Colonic mucosa (tissue), 4 donors: ENCODE measurements at regions of chr11 and their contacts with region 1.

Region 1: GRCh38 chr11:128157423-128158298 is 429.7 kb downstream of the ETS1 start:
- DNase-seq: peak; percentile 60
- H3K4me3 ChIP-seq: no peak overlapping the region
- H3K27ac ChIP-seq: no peak overlapping the region
- H3K4me1 ChIP-seq: no peaks in the 10 kb centered on the region
- H3K27me3 ChIP-seq: no peaks in the 10 kb centered on the region
- CTCF ChIP-seq: peak; percentile 78

Region 2: GRCh38 chr11:127919206-127920000 is 238.3 kb before region 1 on chr11:
- intact Hi-C with region 1: no loop called
- DNase-seq: no peak
- H3K4me3 ChIP-seq: no peak overlapping the region
- H3K27ac ChIP-seq: no peak overlapping the region
- H3K4me1 ChIP-seq: no peaks in the 10 kb centered on the region
- H3K27me3 ChIP-seq: no peaks in the 10 kb centered on the region
- CTCF ChIP-seq: no peak

Region 3: GRCh38 chr11:127986073-127986472 is 171.6 kb before region 1 on chr11:
- intact Hi-C with region 1: no loop called
- DNase-seq: no peak
- H3K4me3 ChIP-seq: no peak overlapping the region
- H3K27ac ChIP-seq: no peak overlapping the region
- H3K4me1 ChIP-seq: no peaks in the 10 kb centered on the region
- H3K27me3 ChIP-seq: no peaks in the 10 kb centered on the region
- CTCF ChIP-seq: no peak

Region 4: DNA sequence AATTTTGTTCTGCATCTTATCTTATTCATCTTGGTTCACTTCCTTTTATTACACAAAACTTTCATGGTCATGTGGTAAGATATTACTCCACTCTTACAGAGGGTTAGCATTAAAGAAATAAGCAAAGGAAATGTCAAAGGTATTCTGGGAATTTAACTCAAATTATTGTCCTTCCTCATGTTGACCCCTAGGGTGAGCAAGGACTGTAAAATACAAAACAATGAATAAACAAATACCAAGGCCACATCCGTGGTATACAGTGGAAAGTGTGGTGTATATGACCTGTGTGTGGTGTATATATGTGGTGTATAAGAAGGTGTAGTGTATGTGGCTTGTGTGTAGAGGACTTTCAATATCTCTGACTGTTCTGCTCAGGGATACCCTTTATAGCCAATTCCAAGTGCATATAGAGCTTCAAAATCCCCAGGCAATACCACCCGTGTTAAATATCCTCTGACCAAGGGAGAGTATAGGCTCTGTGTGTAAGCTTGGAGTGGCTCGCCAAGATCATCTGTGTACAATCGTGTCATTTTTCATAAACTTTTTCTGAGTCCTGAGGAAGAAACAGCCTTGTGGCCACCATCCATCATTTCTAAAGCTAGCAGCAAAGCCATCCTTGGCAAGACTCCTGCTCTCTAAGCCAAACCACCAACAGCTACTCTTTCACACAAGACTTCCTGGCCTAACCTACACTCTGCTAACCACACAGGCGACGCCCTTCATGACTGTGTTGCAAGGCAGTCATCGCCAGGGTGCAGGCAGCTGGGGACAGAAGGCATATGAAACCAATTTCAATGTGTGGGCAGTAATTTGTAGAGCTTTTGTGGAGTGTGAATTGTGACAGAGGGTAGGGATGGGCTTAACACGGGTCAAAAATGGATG is 118.3 kb before region 1 on chr11:
- intact Hi-C with region 1: loop called (anchors 5 kb)
- DNase-seq: peak; percentile 45
- H3K4me3 ChIP-seq: no peak overlapping the region
- H3K27ac ChIP-seq: no peak overlapping the region
- H3K4me1 ChIP-seq: no peaks in the 10 kb centered on the region
- H3K27me3 ChIP-seq: no peaks in the 10 kb centered on the region
- CTCF ChIP-seq: no peak

Region 5: DNA sequence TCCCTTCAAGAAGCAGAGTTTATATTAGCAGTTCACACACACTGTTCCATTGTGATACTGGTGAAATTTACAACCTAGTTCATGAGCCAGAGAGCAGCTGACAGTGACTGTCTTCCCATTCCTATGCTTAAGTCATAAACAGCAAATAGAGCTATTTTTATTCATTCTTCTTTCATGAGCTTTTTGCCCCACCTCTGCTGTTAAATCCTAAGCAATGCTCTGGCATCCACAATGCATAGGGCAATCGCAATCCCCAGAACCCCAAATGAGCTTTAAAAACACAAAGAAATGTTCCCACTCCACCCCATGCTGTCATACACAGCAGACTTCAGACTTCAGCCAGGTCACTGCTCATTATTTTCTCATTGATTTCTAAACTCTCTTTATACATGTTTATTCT is 122.2 kb after region 1 on chr11:
- intact Hi-C with region 1: no loop called
- DNase-seq: no peak
- H3K4me3 ChIP-seq: no peak overlapping the region
- H3K27ac ChIP-seq: no peak overlapping the region
- H3K4me1 ChIP-seq: no peaks in the 10 kb centered on the region
- H3K27me3 ChIP-seq: no peaks in the 10 kb centered on the region
- CTCF ChIP-seq: no peak

Region 6: GRCh38 chr11:128497061-128497775 is 339.6 kb after region 1 on chr11:
- intact Hi-C with region 1: no loop called
- DNase-seq: no peak
- H3K4me3 ChIP-seq: no peak overlapping the region
- H3K27ac ChIP-seq: peak overlapping the region; percentile 58
- H3K4me1 ChIP-seq: peaks cover 18% of the 10 kb centered on the region
- H3K27me3 ChIP-seq: no peaks in the 10 kb centered on the region
- CTCF ChIP-seq: no peak